PC-3 (cell line): ENCODE measurements at regions of chr11 and their contacts with region 1.

Region 1: GRCh38 chr11:6682936-6683861 is at the start of gene MRPL17:
- DNase-seq: peak; percentile 98
- ATAC-seq: peak; percentile 94
- H3K4me3 ChIP-seq: peak within 1 kb of the TSS; percentile 81
- H3K27ac ChIP-seq: peak within 1 kb of the TSS; percentile 41
- H3K4me1 ChIP-seq: peaks cover 5% of the 10 kb centered on the region; the same call in 1 of the 2 replicates
- H3K27me3 ChIP-seq: no peaks in the 10 kb centered on the region
- CTCF ChIP-seq: peak; percentile 84
- total RNA-seq, gene MRPL17: 72.5 and 78.1 TPM in 2 replicates

Region 2: GRCh38 chr11:6481012-6481923 is 201.9 kb before region 1 on chr11 and contains the starts of genes ARFIP2 and TIMM10B:
- CTCF ChIA-PET with region 1: no interaction called
- POLR2A ChIA-PET with region 1: interaction called, 4 read pairs
- intact Hi-C with region 1: loop called (anchors 1 kb)
- DNase-seq: peak; percentile 97
- ATAC-seq: peak; percentile 95
- H3K4me3 ChIP-seq: peak within 1 kb of the TSS; percentile 95
- H3K27ac ChIP-seq: peak within 1 kb of the TSS; percentile 73
- H3K4me1 ChIP-seq: peaks cover 17% of the 10 kb centered on the region
- H3K27me3 ChIP-seq: no peaks in the 10 kb centered on the region
- CTCF ChIP-seq: no peak
- total RNA-seq, gene ARFIP2: 57.2 and 65.2 TPM in 2 replicates
- total RNA-seq, gene TIMM10B: 25.5 and 26.4 TPM in 2 replicates

Region 3: DNA sequence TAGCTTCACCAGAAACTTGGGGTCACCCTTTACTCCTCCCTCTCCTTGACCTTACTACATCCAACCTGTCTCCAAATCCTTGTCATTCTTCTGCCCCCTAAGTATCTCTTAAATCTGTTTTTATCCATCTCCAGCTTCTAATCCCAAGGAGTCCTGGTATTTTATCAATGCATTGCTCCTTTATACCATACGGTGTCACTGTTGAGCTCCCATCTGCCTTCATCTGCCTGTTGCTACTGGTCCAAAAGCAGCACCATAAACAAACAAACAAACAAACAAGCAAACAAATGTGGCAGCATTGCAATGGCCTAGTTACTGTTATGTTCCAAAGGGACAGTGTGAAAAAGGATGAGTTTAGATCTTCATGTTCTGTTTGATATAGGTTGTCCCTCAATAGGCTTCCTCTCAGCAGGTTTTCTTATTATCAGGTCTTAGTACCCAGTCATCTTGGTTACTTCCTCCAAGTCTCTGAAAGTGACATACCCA is 151.9 kb before region 1 on chr11:
- CTCF ChIA-PET with region 1: interaction called, 11 read pairs
- POLR2A ChIA-PET with region 1: no interaction called
- intact Hi-C with region 1: loop called (anchors 1 kb)
- DNase-seq: peak; percentile 60
- ATAC-seq: peak; percentile 71
- H3K4me3 ChIP-seq: no peak overlapping the region
- H3K27ac ChIP-seq: no peak overlapping the region
- H3K4me1 ChIP-seq: no peaks in the 10 kb centered on the region
- H3K27me3 ChIP-seq: no peaks in the 10 kb centered on the region
- CTCF ChIP-seq: peak; percentile 82

Region 4: DNA sequence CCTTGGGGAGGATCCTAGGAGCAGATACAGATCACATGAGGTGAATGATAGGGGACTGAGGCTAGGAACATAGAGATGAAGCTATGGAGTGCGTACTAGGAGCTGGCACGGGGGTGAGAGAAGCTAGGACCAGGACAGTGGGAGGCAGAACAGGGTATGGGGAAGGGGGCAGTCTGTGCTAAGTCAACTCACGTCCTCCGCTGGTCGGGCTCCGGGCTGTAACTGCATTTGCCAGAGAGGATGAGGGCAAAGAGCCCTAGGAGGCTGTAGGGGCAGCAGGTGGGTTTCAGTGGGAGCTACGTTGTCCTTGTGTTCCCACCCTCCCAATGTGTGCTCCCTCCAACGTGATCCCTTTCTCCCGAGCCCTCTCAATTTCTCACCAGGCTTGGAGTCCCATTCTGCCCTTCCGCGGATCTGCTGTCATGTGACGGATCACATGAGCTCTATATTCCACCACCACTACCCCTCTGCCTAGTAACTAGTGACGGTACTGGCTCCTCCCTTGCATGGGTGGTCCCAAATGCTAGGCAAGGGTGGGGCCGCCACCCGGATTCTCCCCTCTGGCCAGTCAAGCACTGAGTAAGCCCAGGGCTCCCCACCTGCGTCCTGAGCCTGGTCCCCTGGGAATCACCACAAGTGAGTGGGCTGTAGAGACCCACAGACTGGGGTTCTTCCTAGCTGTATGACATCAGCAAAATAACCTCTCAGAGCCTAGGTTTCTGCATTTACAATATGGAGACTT is 64.0 kb before region 1 on chr11 and contains the start of gene TPP1:
- CTCF ChIA-PET with region 1: interaction called, 4 read pairs
- POLR2A ChIA-PET with region 1: interaction called, 5 read pairs
- intact Hi-C with region 1: loop called (anchors 1 kb)
- DNase-seq: peak; percentile 93
- ATAC-seq: peak; percentile 90
- H3K4me3 ChIP-seq: peak within 1 kb of the TSS; percentile 79
- H3K27ac ChIP-seq: 0 out of 2 replicates have a peak within 1 kb of the TSS, but pooled peaks have one; percentile 1
- H3K4me1 ChIP-seq: peaks cover 14% of the 10 kb centered on the region
- H3K27me3 ChIP-seq: no peaks in the 10 kb centered on the region
- CTCF ChIP-seq: no peak
- total RNA-seq, gene TPP1: 21.6 and 48.3 TPM in 2 replicates